OCI-LY7 (cell line): ENCODE measurements at regions of chr5 and their contacts with region 1.

Region 1: GRCh38 chr5:66041627-66042026 is 102.5 kb upstream of the SREK1 start:
- DNase-seq: no peak
- H3K4me3 ChIP-seq: no peak overlapping the region
- H3K27ac ChIP-seq: no peak overlapping the region
- H3K4me1 ChIP-seq: no peaks in the 10 kb centered on the region
- CTCF ChIP-seq: no peak

Region 2: DNA sequence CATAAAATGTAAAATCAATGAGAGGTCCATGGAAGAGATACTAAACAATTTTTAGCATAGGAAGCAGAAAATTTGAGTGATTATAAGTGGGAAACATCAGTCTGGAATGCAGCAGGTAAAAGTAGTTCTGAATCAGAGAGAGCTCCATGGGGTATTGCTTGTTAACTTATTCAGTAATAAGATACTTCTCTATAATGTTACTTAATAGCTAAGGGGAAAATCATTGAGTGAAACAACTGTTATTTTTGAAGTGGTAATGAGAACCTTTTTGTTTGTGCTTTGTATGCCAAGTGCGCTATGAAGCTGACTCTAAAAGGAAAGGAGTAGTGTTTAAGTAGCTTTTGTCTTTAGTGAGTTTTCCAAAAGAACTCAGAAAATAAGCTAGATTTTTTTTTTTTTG is 20.0 kb before region 1 on chr5:
- CTCF ChIA-PET with region 1: no interaction called
- POLR2A ChIA-PET with region 1: interaction called, 18 read pairs
- intact Hi-C with region 1: no loop called
- DNase-seq: no peak
- H3K4me3 ChIP-seq: no peak overlapping the region
- H3K27ac ChIP-seq: no peak overlapping the region
- H3K4me1 ChIP-seq: no peaks in the 10 kb centered on the region
- CTCF ChIP-seq: no peak

Region 3: GRCh38 chr5:66057239-66057638 is 15.6 kb after region 1 on chr5:
- CTCF ChIA-PET with region 1: no interaction called
- POLR2A ChIA-PET with region 1: interaction called, 10 read pairs
- intact Hi-C with region 1: no loop called
- DNase-seq: no peak
- H3K4me3 ChIP-seq: no peak overlapping the region
- H3K27ac ChIP-seq: no peak overlapping the region
- H3K4me1 ChIP-seq: no peaks in the 10 kb centered on the region
- CTCF ChIP-seq: no peak

Region 4: DNA sequence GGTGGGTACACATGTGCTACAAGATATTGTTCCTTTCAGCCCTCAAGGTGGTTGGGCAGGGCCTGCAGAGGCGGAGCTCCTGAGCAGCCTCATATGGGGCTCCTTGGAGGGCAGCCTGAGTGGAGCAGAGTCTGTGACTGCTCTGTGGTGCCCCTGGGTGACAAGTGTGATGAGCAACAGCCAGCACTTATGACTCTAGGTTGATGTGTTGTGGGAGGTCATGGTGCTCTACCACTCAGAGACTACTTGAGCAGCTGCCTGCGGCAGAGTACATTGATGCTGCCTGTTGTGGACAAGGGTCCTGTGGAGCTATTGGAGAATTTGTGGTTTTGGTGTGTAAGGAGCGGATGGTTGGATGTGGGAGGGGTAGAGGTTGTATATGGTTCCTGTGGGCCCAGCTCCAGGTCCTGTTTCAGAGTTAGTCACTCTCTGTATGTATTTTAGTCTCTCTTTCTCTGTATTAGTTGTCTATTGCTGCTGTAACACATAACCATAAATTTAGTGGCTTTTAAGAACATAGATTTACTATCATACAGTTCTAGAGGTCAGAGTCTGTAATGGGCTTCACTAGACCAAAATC is 243.8 kb after region 1 on chr5:
- CTCF ChIA-PET with region 1: no interaction called
- POLR2A ChIA-PET with region 1: no interaction called
- intact Hi-C with region 1: no loop called
- DNase-seq: no peak
- H3K4me3 ChIP-seq: no peak overlapping the region
- H3K27ac ChIP-seq: no peak overlapping the region
- H3K4me1 ChIP-seq: no peaks in the 10 kb centered on the region
- CTCF ChIP-seq: no peak